Vagina (tissue), 2 donors: ENCODE measurements at regions of chr6 and their contacts with region 1.

Region 1: DNA sequence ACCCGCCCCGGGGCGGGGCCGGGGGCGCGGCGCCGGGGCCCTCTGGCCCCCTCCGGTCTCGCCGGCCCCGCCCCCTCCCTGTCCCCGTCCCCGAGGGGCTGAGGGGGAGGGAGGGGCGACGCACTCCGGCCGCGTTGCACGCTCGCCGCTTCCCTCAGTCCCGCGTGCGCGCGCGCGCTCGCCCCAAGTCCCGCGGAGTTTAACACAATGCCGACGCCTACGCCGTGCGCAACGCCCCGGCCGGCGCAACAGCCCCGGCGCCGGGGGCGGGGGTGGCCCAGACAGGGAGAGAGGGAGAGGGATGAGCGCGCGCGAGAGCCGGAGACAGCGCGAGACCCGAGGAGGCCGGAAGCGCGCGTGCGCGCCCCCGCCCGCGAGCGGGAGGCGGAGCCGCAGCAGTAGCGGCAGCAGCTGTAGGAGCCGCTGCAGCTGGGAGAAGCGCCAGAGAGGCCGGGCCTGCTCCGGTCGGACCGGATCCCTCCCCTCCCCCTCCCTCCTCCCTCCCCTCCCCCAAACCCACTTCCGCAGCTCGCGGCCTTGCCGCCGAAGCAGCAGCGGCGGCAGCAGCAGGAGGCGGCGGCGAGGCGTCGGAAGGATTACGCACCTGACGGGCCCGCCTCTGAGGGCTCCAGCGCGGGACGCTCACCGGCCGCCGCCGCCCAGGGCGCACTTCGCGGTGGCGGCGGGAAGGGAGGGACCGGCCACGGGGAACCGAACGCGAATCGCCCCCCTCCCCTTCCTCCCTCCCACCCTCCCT is 905 bp downstream of the ZBTB2 start:
- DNase-seq: peak in 1 of 2 donors; percentile 97
- H3K4me3 ChIP-seq: peak overlapping the region; percentile 82 to 96
- H3K27ac ChIP-seq: peak overlapping the region; percentile 100
- H3K4me1 ChIP-seq: peaks cover 50% of the 10 kb centered on the region
- H3K27me3 ChIP-seq: no peaks in the 10 kb centered on the region
- CTCF ChIP-seq: no peak
- POLR2A ChIP-seq: peak in 1 of 2 donors; percentile 80

Region 2: GRCh38 chr6:151254451-151255081 is 135.9 kb before region 1 on chr6:
- intact Hi-C with region 1: no loop called
- DNase-seq: no peak
- H3K4me3 ChIP-seq: no peak overlapping the region
- H3K27ac ChIP-seq: no peak overlapping the region
- H3K4me1 ChIP-seq: peaks cover 7% of the 10 kb centered on the region
- H3K27me3 ChIP-seq: no peaks in the 10 kb centered on the region
- CTCF ChIP-seq: no peak
- POLR2A ChIP-seq: no peak

Region 3: GRCh38 chr6:151451950-151452749 is 61.7 kb after region 1 on chr6 and contains the start of gene RMND1:
- intact Hi-C with region 1: loop called (anchors 2 kb)
- DNase-seq: peak; percentile 98 to 100
- H3K4me3 ChIP-seq: peak within 1 kb of the TSS; percentile 87 to 98
- H3K27ac ChIP-seq: peak within 1 kb of the TSS; percentile 93
- H3K4me1 ChIP-seq: peaks cover 30% of the 10 kb centered on the region
- H3K27me3 ChIP-seq: no peaks in the 10 kb centered on the region
- CTCF ChIP-seq: no peak
- POLR2A ChIP-seq: peak in 1 of 2 donors; percentile 52
- total RNA-seq, gene RMND1: 15.7 TPM